K562 (cell line): ENCODE measurements at regions of chr1 and their contacts with region 1.

Region 1: GRCh38 chr1:43934101-43934985 is 742 bp downstream of the ARTN start:
- DNase-seq: peak; percentile 86 to 90 (median 88)
- ATAC-seq: peak; percentile 95
- H3K4me3 ChIP-seq: no peak overlapping the region
- H3K27ac ChIP-seq: no peak overlapping the region
- H3K4me1 ChIP-seq: peaks cover 12 to 32% of the 10 kb centered on the region in 2 experiments; a peak in 4 of 5 replicates
- H3K27me3 ChIP-seq: no peaks in the 10 kb centered on the region
- CTCF ChIP-seq: peak; percentile 95 to 99 (median 98)
- EP300 ChIP-seq: no peak
- POLR2A ChIP-seq: no peak
- RAD21 ChIP-seq: peak; percentile 89 to 97

Region 2: DNA sequence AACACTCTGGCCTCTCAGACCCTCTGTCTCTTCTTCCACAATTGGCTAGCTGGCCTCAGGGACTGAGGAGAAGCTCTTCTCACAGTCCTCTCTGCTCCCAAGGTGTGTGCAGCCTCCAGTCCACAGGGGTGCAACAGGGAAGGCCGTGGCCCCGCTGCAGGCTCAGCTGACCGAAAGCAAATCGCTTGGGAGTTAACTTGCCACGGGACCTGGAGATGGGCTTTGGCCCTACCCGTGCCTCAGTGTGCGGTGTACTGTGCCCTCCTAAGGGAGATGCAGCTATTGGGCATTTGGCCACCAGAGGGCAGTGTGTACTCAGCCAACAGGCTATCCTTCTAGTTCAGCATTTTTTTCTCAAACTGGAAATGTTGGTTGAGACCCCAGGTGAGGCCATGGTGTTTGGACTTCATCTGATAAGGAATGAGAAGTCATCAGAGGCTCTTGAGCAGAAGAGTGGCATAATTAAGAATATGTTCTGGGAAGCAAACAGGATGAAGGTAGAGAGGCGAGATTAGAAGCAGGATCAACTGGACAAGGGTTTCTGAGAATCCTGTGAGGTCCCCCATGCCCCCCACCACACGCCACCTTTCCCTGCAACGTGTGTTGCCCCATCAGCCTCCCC is 707.1 kb before region 1 on chr1:
- CTCF ChIA-PET with region 1: interaction called, 9 read pairs
- POLR2A ChIA-PET with region 1: no interaction called
- in situ Hi-C with region 1: loop called (anchors 10 kb)
- intact Hi-C with region 1: loop called (anchors 1 kb)
- DNase-seq: peak; percentile 82 to 88 (median 87)
- ATAC-seq: peak; percentile 97
- H3K4me3 ChIP-seq: no peak overlapping the region
- H3K27ac ChIP-seq: no peak overlapping the region
- H3K4me1 ChIP-seq: 0 out of 5 replicates have a peak, but pooled peaks cover 0 to 3% of the 10 kb centered on the region in 2 experiments
- H3K27me3 ChIP-seq: peaks cover 12 to 55% of the 10 kb centered on the region in 2 experiments
- CTCF ChIP-seq: peak; percentile 90 to 98 (median 96)
- EP300 ChIP-seq: no peak
- POLR2A ChIP-seq: no peak
- RAD21 ChIP-seq: peak; percentile 95 to 98

Region 3: DNA sequence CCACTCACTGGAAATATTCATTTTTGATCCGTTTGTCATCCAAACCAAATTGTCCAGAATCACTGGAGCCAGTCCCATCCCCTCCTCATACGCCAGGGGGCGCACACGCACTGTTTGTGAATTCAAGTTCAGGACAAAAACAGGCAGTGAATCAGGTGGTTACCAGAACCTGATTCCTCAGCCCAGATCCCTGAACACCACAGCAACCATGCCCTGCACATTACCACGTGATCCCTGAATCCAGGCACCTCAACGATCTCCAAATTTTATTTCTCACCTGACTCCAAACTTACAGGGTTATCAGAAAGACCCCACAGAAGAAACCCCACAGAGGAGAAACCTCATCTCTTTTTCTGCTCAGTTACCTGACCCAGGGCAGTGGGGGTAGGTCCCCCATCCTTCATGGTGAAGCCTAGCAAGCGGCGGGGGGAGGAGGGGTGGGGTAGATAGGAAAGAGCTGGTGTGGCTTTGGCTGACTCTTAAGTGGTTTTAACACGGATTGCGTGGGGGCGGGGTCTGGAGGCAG is 405.1 kb before region 1 on chr1:
- CTCF ChIA-PET with region 1: interaction called, 56 read pairs
- POLR2A ChIA-PET with region 1: interaction called, 5 read pairs
- in situ Hi-C with region 1: loop called (anchors 5 kb)
- intact Hi-C with region 1: loop called (anchors 1 kb)
- DNase-seq: peak; percentile 76 to 92 (median 83)
- ATAC-seq: peak; percentile 84
- H3K4me3 ChIP-seq: no peak overlapping the region
- H3K27ac ChIP-seq: no peak overlapping the region
- H3K4me1 ChIP-seq: peaks cover 12 to 28% of the 10 kb centered on the region in 2 experiments; a peak in 4 of 5 replicates
- H3K27me3 ChIP-seq: peaks cover 26 to 37% of the 10 kb centered on the region in 2 experiments; a peak in 4 of 5 replicates
- CTCF ChIP-seq: peak; percentile 89 to 98 (median 98)
- EP300 ChIP-seq: no peak
- POLR2A ChIP-seq: no peak
- RAD21 ChIP-seq: peak; percentile 91 to 98

Region 4: DNA sequence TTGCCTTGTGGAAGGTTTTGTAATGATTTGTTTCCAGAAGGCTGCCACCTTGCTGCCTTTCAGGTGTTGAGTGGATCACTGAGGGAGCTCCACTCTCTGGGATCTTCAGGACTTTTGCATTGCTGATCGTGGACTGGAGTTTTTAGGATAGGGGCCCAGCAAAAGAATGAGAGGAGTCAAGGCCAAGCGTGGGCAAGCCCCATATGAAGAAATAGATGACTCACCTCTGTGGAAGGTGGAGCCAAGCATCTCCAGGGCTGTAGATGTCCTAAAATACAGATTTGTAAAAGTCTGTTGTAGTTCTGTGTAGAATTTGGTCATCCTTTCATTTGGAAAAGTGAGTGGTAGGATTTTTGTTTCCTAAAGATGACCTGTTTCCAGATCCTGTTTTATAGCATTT is 160.0 kb before region 1 on chr1:
- CTCF ChIA-PET with region 1: no interaction called
- POLR2A ChIA-PET with region 1: interaction called, 3 read pairs
- in situ Hi-C with region 1: loop called (anchors 5 kb)
- intact Hi-C with region 1: no loop called
- DNase-seq: peak in 3 of 4 experiments; percentile 25 to 35 (median 32)
- ATAC-seq: no peak
- H3K4me3 ChIP-seq: no peak overlapping the region
- H3K27ac ChIP-seq: no peak overlapping the region
- H3K4me1 ChIP-seq: peaks cover 4 to 14% of the 10 kb centered on the region in 2 experiments; a peak in 4 of 5 replicates
- H3K27me3 ChIP-seq: no peaks in the 10 kb centered on the region
- CTCF ChIP-seq: no peak
- EP300 ChIP-seq: no peak
- POLR2A ChIP-seq: no peak
- RAD21 ChIP-seq: no peak

Region 5: GRCh38 chr1:43946236-43947060 is 12.1 kb after region 1 on chr1 and contains the start of gene IPO13:
- CTCF ChIA-PET with region 1: interaction called, 7 read pairs
- POLR2A ChIA-PET with region 1: interaction called, 10 read pairs
- in situ Hi-C with region 1: no loop called
- intact Hi-C with region 1: no loop called
- DNase-seq: peak; percentile 98 to 99 (median 98)
- ATAC-seq: peak; percentile 96
- H3K4me3 ChIP-seq: peak within 1 kb of the TSS; percentile 60
- H3K27ac ChIP-seq: peak within 1 kb of the TSS; percentile 99
- H3K4me1 ChIP-seq: peaks cover 17 to 41% of the 10 kb centered on the region in 2 experiments
- H3K27me3 ChIP-seq: no peaks in the 10 kb centered on the region
- CTCF ChIP-seq: peak; percentile 91 to 96 (median 95)
- EP300 ChIP-seq: peak; percentile 18; the same call in 1 of the 2 replicates
- POLR2A ChIP-seq: peak; percentile 90
- RAD21 ChIP-seq: peak; percentile 67 to 76
- polyA plus RNA-seq, gene IPO13: 7.0 to 9.8 TPM

Region 6: GRCh38 chr1:44012941-44013609 is 78.7 kb after region 1 on chr1:
- CTCF ChIA-PET with region 1: no interaction called
- POLR2A ChIA-PET with region 1: no interaction called
- in situ Hi-C with region 1: no loop called
- intact Hi-C with region 1: no loop called
- DNase-seq: no peak
- ATAC-seq: no peak
- H3K4me3 ChIP-seq: no peak overlapping the region
- H3K27ac ChIP-seq: no peak overlapping the region
- H3K4me1 ChIP-seq: peaks cover 6 to 48% of the 10 kb centered on the region in 2 experiments; a peak in 4 of 5 replicates
- H3K27me3 ChIP-seq: no peaks in the 10 kb centered on the region
- CTCF ChIP-seq: no peak
- EP300 ChIP-seq: no peak
- POLR2A ChIP-seq: no peak
- RAD21 ChIP-seq: no peak